Transverse colon (tissue), 4 donors: ENCODE measurements at regions of chr12 and their contacts with region 1.

Region 1: DNA sequence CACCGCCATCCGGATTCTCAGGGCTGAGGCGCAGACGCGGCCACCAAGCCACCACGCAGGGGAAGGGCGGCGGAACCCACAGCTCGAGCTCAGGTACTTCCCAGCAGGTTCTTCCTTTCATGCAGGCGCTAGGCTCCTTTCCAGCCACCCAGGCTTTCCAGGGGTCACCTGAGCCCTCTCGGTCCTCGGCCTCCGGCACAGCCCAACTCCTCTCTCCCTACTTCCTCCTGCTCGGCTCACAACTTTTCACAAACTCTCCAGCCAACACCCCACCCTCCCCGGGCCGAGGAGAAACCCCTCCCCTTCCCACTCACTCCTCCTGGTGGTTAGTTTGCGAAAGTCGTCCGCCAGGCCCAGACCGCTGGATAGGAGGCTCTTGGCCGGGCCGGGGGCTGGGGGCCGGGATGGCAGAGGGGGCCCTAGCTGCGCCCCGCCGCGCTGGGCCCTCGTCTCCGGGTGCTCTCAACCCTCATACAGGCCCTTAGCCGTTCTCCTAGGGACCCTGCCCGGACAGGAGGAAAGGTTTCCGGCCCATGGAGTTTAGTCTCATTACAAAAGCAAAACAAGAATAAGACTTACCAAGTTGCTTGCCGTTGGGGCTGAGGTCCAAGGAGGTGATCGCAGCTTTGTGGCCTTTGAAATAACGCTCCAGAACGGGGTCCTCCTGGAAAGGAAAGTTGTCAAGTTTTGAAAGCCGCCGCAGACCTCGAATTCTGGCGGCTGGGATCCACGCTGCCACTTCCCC is at the start of gene GALNT4:
- DNase-seq: peak; percentile 93
- H3K4me3 ChIP-seq: peak within 1 kb of the TSS; percentile 63 to 97 (median 93)
- H3K27ac ChIP-seq: peak within 1 kb of the TSS; percentile 92 to 97 (median 94)
- H3K4me1 ChIP-seq: peaks cover 17 to 52% (median 26%) of the 10 kb centered on the region in 4 donors
- H3K27me3 ChIP-seq: no peaks in the 10 kb centered on the region
- CTCF ChIP-seq: peak; percentile 73 to 96 (median 78)
- EP300 ChIP-seq: no peak
- POLR2A ChIP-seq: peak; percentile 90
- total RNA-seq, gene GALNT4: 11.5 to 37.2 (median 26.1) TPM

Region 2: GRCh38 chr12:89019408-89020120 is 505.1 kb before region 1 on chr12:
- in situ Hi-C with region 1: loop called in 2 of 4 experiments (anchors 5 to 10 kb)
- intact Hi-C with region 1: loop called (anchors 5 kb)
- DNase-seq: peak; percentile 86
- H3K4me3 ChIP-seq: no peak overlapping the region
- H3K27ac ChIP-seq: no peak overlapping the region
- H3K4me1 ChIP-seq: peaks cover 0 to 15% (median 4%) of the 10 kb centered on the region in 4 donors
- H3K27me3 ChIP-seq: no peaks in the 10 kb centered on the region
- CTCF ChIP-seq: peak; percentile 76 to 86 (median 81)
- EP300 ChIP-seq: no peak
- POLR2A ChIP-seq: no peak

Region 3: GRCh38 chr12:89051065-89051677 is 473.5 kb before region 1 on chr12:
- in situ Hi-C with region 1: loop called in 1 of 4 experiments (anchors 10 kb)
- intact Hi-C with region 1: no loop called
- DNase-seq: no peak
- H3K4me3 ChIP-seq: no peak overlapping the region
- H3K27ac ChIP-seq: no peak overlapping the region
- H3K4me1 ChIP-seq: no peaks in the 10 kb centered on the region
- H3K27me3 ChIP-seq: no peaks in the 10 kb centered on the region
- CTCF ChIP-seq: peak; percentile 88 to 94 (median 90)
- EP300 ChIP-seq: no peak
- POLR2A ChIP-seq: no peak

Region 4: DNA sequence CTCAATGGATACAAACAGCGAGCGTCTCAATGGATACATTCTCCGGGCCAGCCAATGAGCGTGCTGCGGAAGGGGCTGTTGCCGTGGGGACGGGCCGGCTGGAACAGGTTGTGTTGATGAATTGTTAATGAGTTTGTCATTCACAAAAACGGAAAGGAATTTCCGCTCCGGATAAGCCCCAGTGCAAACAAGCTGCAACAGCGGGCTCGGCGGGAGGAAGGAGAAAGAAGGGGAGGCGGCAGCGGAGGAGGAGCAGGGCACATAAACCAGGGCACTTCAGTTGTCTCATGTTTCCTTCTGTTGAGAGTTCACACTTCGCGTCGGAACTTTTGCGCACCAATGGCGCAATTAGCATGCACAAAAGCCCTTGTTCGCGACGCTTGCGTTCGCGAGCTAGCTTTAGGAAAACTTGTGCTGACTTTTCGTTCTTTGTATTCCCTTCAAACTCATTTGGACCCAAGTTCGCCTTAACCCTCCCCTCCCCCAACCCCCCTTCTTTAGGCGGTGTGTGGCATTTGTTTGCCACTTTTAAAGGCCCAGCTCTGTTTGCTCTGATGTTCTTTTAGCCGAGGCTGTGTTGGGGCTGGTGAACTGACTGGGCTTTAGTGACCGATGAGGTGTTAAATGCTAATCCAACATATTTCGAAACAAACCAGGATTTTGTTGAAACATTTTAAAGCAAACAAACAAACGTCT is 172.1 kb before region 1 on chr12 and contains the start of gene DUSP6:
- in situ Hi-C with region 1: no loop called
- intact Hi-C with region 1: loop called (anchors 10 kb)
- DNase-seq: peak; percentile 97
- H3K4me3 ChIP-seq: peak within 1 kb of the TSS; percentile 61 to 71 (median 67)
- H3K27ac ChIP-seq: peak within 1 kb of the TSS; percentile 96 to 98 (median 98)
- H3K4me1 ChIP-seq: peaks cover 8 to 60% (median 21%) of the 10 kb centered on the region in 4 donors
- H3K27me3 ChIP-seq: no peaks in the 10 kb centered on the region
- CTCF ChIP-seq: no peak
- EP300 ChIP-seq: peak; percentile 6
- POLR2A ChIP-seq: peak; percentile 86
- total RNA-seq, gene DUSP6: 22.9 to 83.4 (median 53.2) TPM

Region 5: GRCh38 chr12:89470741-89471509 is 53.8 kb before region 1 on chr12:
- in situ Hi-C with region 1: loop called in 3 of 4 experiments (anchors 5 to 10 kb)
- intact Hi-C with region 1: loop called (anchors 5 kb)
- DNase-seq: no peak
- H3K4me3 ChIP-seq: no peak overlapping the region
- H3K27ac ChIP-seq: no peak overlapping the region
- H3K4me1 ChIP-seq: peaks cover 0 to 27% (median 5%) of the 10 kb centered on the region in 4 donors
- H3K27me3 ChIP-seq: no peaks in the 10 kb centered on the region
- CTCF ChIP-seq: peak; percentile 60 to 82 (median 68)
- EP300 ChIP-seq: no peak
- POLR2A ChIP-seq: no peak